Heart right ventricle (tissue), 16 donors: ENCODE measurements at regions of chr18 and their contacts with region 1.

Region 1: DNA sequence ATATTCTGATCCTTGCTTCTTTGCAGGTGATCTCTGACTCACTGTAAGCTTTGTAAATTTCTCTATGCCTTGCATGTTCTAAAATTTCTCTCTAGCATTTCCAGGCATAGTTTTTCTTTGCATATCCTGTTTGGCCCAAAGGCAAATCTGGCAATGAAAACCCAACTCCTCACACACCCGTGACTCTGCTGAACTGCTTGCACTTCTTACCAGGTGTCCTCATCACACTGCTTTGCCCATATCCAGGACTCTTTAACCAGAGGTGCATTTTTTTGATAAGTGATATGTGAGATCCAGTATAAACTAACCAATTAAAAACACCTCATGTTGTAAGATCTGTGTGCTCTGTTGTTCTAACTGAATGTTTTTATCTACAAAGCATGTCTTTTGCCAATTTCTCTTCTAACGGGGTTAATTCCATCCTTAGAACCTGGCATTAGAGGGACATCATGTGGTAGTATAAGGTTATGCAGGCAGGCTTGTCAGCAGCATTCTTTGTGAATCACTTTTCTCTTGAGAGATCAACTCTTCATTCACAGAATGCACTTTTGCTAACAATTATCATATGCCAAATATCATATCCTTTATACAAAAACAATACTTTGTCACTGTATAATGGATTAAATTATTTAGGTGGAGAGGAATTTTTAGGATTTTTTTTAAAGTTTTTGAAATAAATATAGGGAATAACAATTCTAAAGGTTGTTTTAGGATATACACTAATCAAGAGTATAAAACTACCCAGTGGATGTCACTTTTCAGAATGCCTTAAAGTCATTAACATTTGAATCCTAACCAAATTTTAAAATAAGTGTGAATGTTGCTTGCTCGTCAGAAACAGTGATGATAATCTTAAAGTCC is 20.8 kb upstream of the TMX3 start:
- DNase-seq: no peak
- ATAC-seq: peak in 6 of 8 donors; percentile 37 to 76 (median 50)
- H3K4me3 ChIP-seq: peak overlapping the region in 1 of 10 donors; percentile 12
- H3K27ac ChIP-seq: no peak overlapping the region
- H3K4me1 ChIP-seq: peaks cover 0 to 6% (median 0%) of the 10 kb centered on the region in 9 donors
- H3K27me3 ChIP-seq: no peaks in the 10 kb centered on the region
- CTCF ChIP-seq: peak in 8 of 9 donors; percentile 31 to 77 (median 66)

Region 2: DNA sequence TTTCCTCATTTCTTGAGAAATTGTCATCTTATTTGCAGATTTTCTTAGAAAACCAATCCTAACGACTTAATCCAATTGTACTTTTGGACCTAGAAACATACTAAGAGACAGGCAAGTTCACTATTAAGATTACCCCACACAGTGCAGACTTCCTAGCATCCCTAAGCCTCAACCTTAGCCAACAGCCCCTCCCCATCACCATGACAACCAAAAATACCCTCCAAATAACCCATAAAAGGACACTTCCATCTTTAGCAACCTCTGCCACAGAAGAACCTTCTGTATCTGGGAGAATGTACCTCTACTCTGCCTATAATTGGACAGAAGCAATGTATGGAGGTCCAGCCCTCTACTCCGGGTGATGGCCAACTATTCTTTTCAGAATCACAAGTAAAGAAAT is 55.2 kb before region 1 on chr18:
- intact Hi-C with region 1: loop called in 1 of 10 experiments (anchors 10 kb)
- DNase-seq: no peak
- ATAC-seq: no peak
- H3K4me3 ChIP-seq: no peak overlapping the region
- H3K27ac ChIP-seq: no peak overlapping the region
- H3K4me1 ChIP-seq: peaks cover 0 to 6% (median 0%) of the 10 kb centered on the region in 9 donors
- H3K27me3 ChIP-seq: no peaks in the 10 kb centered on the region
- CTCF ChIP-seq: no peak